ENCODE measurements at regions of chr15 and their contacts with region 1.

Region 1: GRCh38 chr15:65638681-65639089 is 16.9 kb downstream of the SLC24A1 start:
- DNase-seq: no peak
- H3K4me3 ChIP-seq: no peak overlapping the region
- H3K27ac ChIP-seq: no peak overlapping the region
- H3K4me1 ChIP-seq: peaks cover 0 to 10% (median 2%) of the 10 kb centered on the region in 4 donors
- H3K27me3 ChIP-seq: no peaks in the 10 kb centered on the region
- CTCF ChIP-seq: peak; percentile 75 to 88 (median 83)
- EP300 ChIP-seq: no peak
- POLR2A ChIP-seq: no peak

Region 2: DNA sequence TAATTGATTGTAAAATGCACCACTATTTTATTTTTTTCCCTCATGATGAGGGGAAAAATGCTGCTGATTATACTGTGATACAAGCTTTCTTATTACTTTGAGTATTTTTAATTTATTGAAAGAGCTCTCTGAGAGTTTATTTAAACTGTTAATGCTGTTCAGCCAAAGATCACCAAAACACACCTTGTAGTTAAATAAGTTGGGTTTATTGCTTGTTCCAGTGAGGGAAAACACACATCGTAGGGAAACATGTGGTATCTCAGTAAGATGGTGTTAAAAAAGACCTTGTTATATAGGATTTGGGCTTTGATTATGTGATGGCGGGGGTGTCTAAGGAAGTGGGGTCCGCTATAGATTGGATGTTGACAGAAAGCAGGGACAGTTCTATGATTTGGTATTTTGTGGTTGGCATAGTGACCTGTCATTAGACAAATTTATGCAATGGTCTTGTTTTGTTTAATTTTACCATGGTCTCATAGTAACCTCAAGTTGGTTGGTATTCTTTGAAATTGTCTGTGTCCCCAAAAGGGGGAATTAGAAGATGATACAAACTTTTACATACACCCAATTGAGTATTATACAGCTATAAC is 97.4 kb before region 1 on chr15:
- in situ Hi-C with region 1: no loop called
- intact Hi-C with region 1: no loop called
- DNase-seq: no peak
- H3K4me3 ChIP-seq: no peak overlapping the region
- H3K27ac ChIP-seq: no peak overlapping the region
- H3K4me1 ChIP-seq: peaks cover 0 to 12% (median 6%) of the 10 kb centered on the region in 4 donors
- H3K27me3 ChIP-seq: no peaks in the 10 kb centered on the region
- CTCF ChIP-seq: no peak
- EP300 ChIP-seq: no peak
- POLR2A ChIP-seq: no peak

Region 3: GRCh38 chr15:65856821-65857455 is 218.3 kb after region 1 on chr15:
- in situ Hi-C with region 1: loop called (anchors 10 to 25 kb)
- intact Hi-C with region 1: loop called (anchors 10 kb)
- DNase-seq: peak; percentile 81
- H3K4me3 ChIP-seq: no peak overlapping the region
- H3K27ac ChIP-seq: no peak overlapping the region
- H3K4me1 ChIP-seq: no peaks in the 10 kb centered on the region
- H3K27me3 ChIP-seq: no peaks in the 10 kb centered on the region
- CTCF ChIP-seq: peak; percentile 83 to 93 (median 87)
- EP300 ChIP-seq: no peak
- POLR2A ChIP-seq: no peak

Region 4: DNA sequence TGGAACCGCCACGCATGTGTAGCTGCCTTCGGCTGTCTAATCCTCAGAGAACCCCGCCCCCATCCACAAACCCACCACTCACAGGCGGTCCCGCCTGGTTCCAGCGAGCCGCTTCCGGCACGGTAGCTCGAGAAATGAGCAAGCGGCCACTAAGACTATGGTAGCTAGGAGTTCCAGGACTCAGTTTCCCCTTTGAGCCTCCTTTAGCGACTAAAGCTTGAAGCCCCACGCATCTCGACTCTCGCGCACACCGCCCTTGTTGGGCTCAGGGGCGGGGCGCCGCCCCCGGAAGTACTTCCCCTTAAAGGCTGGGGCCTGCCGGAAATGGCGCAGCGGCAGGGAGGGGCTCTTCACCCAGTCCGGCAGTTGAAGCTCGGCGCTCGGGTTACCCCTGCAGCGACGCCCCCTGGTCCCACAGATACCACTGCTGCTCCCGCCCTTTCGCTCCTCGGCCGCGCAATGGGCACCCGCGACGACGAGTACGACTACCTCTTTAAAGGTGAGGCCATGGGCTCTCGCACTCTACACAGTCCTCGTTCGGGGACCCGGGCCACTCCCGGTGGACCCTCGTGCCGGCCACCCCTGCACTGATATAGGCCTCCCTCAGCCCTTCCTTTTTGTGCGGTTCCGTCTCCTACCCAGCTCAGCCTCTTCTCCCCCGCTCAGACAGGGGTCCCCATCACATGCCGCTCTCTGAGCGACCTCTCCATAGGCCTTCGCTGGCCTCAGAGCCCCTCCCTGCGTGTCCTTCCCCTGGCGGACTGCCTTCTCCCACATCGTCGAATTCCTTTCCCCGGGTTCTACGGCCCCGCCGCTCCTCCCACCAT is 230.7 kb after region 1 on chr15 and contains the start of gene RAB11A:
- in situ Hi-C with region 1: loop called in 1 of 4 experiments (anchors 25 kb)
- intact Hi-C with region 1: no loop called
- DNase-seq: peak; percentile 96
- H3K4me3 ChIP-seq: peak within 1 kb of the TSS; percentile 70 to 90 (median 82)
- H3K27ac ChIP-seq: peak within 1 kb of the TSS; percentile 96 to 98 (median 97)
- H3K4me1 ChIP-seq: peaks cover 0 to 35% (median 11%) of the 10 kb centered on the region in 4 donors
- H3K27me3 ChIP-seq: no peaks in the 10 kb centered on the region
- CTCF ChIP-seq: peak; percentile 3 to 34 (median 16)
- EP300 ChIP-seq: peak; percentile 37
- POLR2A ChIP-seq: peak; percentile 98
- total RNA-seq, gene RAB11A: 25.5 to 322 (median 134) TPM

Region 5: GRCh38 chr15:66188464-66188863 is 549.8 kb after region 1 on chr15:
- in situ Hi-C with region 1: loop called in 2 of 4 experiments (anchors 25 kb)
- intact Hi-C with region 1: no loop called
- DNase-seq: no peak
- H3K4me3 ChIP-seq: no peak overlapping the region
- H3K27ac ChIP-seq: no peak overlapping the region
- H3K4me1 ChIP-seq: no peaks in the 10 kb centered on the region
- H3K27me3 ChIP-seq: peaks cover 6% of the 10 kb centered on the region
- CTCF ChIP-seq: no peak
- EP300 ChIP-seq: no peak
- POLR2A ChIP-seq: no peak